Mammary epithelial cell (primary cell): ENCODE measurements at regions of chr4 and their contacts with region 1.

Region 1: GRCh38 chr4:27684610-27685011 is 824.0 kb downstream of the STIM2 start:
- DNase-seq: peak; percentile 60
- H3K4me3 ChIP-seq: no peak overlapping the region
- H3K27ac ChIP-seq: no peak overlapping the region
- H3K4me1 ChIP-seq: peaks cover 2% of the 10 kb centered on the region
- H3K27me3 ChIP-seq: peaks cover 3% of the 10 kb centered on the region
- CTCF ChIP-seq: peak; percentile 89 to 92

Region 2: GRCh38 chr4:27048429-27049238 is 636.0 kb before region 1 on chr4:
- CTCF ChIA-PET with region 1: no interaction called
- dilution Hi-C with region 1: no loop called
- in situ Hi-C with region 1: no loop called
- intact Hi-C with region 1: loop called (anchors 5 kb)
- DNase-seq: peak; percentile 6
- H3K4me3 ChIP-seq: peak overlapping the region in 2 of 3 experiments; percentile 13 to 28
- H3K27ac ChIP-seq: no peak overlapping the region
- H3K4me1 ChIP-seq: peaks cover 4% of the 10 kb centered on the region
- H3K27me3 ChIP-seq: no peaks in the 10 kb centered on the region
- CTCF ChIP-seq: peak; percentile 53 to 66

Region 3: DNA sequence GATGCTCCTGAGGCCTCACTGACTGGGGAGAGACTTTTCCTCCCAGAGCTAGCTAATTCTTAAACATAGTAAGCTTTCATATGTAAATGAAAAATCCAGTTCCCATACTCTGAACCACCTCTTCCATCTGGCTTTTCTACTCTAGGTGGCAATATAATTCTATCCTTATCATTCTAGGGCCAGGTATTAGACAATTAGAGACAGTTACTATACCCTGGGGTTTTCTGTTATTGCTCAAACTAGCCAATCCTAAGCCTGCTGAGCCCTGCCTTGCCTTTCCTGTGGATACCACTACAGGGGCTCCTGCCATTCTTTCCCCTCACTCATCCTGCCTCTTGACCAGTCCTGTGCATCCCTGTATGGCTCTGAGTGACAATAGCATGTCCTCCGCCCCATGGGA is 272.0 kb before region 1 on chr4:
- CTCF ChIA-PET with region 1: no interaction called
- dilution Hi-C with region 1: no loop called
- in situ Hi-C with region 1: no loop called
- intact Hi-C with region 1: loop called (anchors 10 kb)
- DNase-seq: no peak
- H3K4me3 ChIP-seq: no peak overlapping the region
- H3K27ac ChIP-seq: no peak overlapping the region
- H3K4me1 ChIP-seq: no peaks in the 10 kb centered on the region
- H3K27me3 ChIP-seq: no peaks in the 10 kb centered on the region
- CTCF ChIP-seq: peak in 1 of 2 donors; percentile 24

Region 4: DNA sequence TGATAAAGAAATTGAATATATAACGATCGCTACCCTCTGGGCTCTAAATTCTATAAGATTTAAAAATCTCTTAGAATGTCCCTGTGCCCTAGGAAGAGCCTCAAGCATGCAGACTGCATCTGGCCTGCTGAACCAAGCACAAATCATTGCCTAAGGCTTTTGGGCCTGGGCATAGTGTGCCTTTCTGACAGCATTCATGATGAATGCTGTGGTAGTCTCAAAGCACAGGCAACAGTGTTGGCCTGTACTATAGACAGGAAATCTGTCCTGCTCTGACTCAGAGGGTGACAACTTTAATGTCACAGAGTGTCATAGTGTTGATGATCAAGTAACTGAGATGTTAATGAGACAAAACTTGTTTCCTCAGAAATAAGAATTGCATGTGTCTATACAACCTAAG is 106.7 kb before region 1 on chr4:
- CTCF ChIA-PET with region 1: no interaction called
- dilution Hi-C with region 1: no loop called
- in situ Hi-C with region 1: no loop called
- intact Hi-C with region 1: no loop called
- DNase-seq: no peak
- H3K4me3 ChIP-seq: no peak overlapping the region
- H3K27ac ChIP-seq: no peak overlapping the region
- H3K4me1 ChIP-seq: no peaks in the 10 kb centered on the region
- H3K27me3 ChIP-seq: no peaks in the 10 kb centered on the region
- CTCF ChIP-seq: no peak

Region 5: DNA sequence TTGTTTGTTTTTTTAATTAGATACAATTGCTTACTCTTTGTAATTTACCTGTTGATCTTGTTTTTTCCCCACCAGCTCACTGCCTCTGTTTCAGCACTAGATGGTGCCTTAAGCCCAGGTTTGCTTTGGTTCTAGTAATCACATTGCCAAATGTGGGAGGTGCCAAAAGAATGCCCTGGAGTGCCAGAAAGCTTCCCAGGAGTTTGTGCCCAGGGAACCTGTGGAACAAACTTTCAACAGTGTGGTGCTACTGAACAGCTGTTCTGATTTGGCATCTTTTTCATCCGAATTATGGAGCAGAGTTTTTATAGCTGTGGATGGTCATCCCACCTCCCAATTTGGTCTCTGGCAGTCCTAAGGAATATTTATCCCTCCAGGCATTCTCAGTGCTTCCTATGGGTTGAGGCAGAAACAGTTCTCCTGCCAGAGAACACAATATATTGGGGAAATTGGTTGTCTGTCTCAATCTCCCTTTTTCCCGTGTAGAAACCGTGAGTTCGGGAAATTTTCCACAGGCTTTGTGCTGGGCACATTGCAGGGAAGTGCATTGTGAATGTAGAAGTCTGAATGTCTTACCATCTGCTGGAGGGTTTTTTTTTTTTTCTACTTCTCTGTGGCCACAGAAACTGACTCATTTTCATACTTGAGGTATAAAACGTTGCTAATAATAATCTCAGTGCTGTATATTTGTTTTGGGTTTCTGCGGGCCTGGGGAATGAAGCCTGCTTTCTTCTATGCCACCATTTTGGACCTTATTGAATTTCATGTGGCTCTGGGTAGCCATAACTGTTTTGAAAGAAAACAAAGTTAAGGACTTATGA is 177.0 kb after region 1 on chr4:
- CTCF ChIA-PET with region 1: interaction called, 3 read pairs
- dilution Hi-C with region 1: no loop called
- in situ Hi-C with region 1: no loop called
- intact Hi-C with region 1: loop called (anchors 1 kb)
- DNase-seq: peak; percentile 63
- H3K4me3 ChIP-seq: no peak overlapping the region
- H3K27ac ChIP-seq: no peak overlapping the region
- H3K4me1 ChIP-seq: no peaks in the 10 kb centered on the region
- H3K27me3 ChIP-seq: peaks cover 4% of the 10 kb centered on the region
- CTCF ChIP-seq: peak; percentile 69 to 84